ENCODE measurements at regions of chr18 and their contacts with region 1.

Region 1: GRCh38 chr18:28003451-28003850 is 173.5 kb downstream of the CDH2 start:
- DNase-seq: no peak
- ATAC-seq: peak in 6 of 8 donors; percentile 63 to 88 (median 82)
- H3K4me3 ChIP-seq: no peak overlapping the region
- H3K27ac ChIP-seq: peak overlapping the region in 7 of 10 donors; percentile 8 to 71 (median 48)
- H3K4me1 ChIP-seq: peaks cover 0 to 33% (median 5%) of the 10 kb centered on the region in 9 donors
- H3K27me3 ChIP-seq: no peaks in the 10 kb centered on the region
- CTCF ChIP-seq: no peak

Region 2: DNA sequence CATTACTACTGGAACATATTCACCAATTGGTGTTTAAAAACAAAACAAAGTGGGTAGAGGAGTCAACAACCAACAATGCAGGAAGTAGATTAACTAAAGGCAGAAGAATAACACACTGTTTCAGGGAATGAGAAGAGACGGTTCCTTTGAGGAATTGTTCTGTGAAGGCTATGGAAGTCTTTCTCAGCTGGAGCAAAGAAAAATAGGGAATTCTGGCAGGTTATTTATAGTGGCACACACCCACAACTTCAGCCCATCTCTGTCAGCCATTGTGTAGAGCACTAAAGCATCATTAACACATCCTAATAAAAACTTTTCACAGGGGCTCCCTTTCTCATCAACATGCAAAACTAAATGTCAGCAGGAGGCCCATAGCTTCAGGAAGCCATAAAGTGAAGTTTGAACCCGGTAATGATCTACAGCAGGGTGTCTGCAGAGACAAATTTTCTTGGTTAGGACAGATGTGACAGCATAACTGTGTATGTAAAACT is 59.9 kb after region 1 on chr18:
- intact Hi-C with region 1: no loop called
- DNase-seq: no peak
- ATAC-seq: no peak
- H3K4me3 ChIP-seq: no peak overlapping the region
- H3K27ac ChIP-seq: no peak overlapping the region
- H3K4me1 ChIP-seq: peaks cover 0 to 37% (median 19%) of the 10 kb centered on the region in 9 donors
- H3K27me3 ChIP-seq: no peaks in the 10 kb centered on the region
- CTCF ChIP-seq: no peak

Region 3: GRCh38 chr18:28095041-28095440 is 91.6 kb after region 1 on chr18:
- intact Hi-C with region 1: loop called in 1 of 10 experiments (anchors 10 kb)
- DNase-seq: no peak
- ATAC-seq: peak in 1 of 8 donors; percentile 15
- H3K4me3 ChIP-seq: no peak overlapping the region
- H3K27ac ChIP-seq: no peak overlapping the region
- H3K4me1 ChIP-seq: peaks cover 0 to 30% (median 5%) of the 10 kb centered on the region in 9 donors
- H3K27me3 ChIP-seq: no peaks in the 10 kb centered on the region
- CTCF ChIP-seq: no peak

Region 4: GRCh38 chr18:28189400-28190239 is 186.2 kb after region 1 on chr18:
- intact Hi-C with region 1: loop called in 1 of 10 experiments (anchors 10 kb)
- DNase-seq: no peak
- ATAC-seq: peak in 1 of 8 donors; percentile 33
- H3K4me3 ChIP-seq: no peak overlapping the region
- H3K27ac ChIP-seq: no peak overlapping the region
- H3K4me1 ChIP-seq: no peaks in the 10 kb centered on the region
- H3K27me3 ChIP-seq: no peaks in the 10 kb centered on the region
- CTCF ChIP-seq: peak in 8 of 9 donors; percentile 20 to 57 (median 37)